ENCODE measurements at regions of chr4 and their contacts with region 1.

Region 1: DNA sequence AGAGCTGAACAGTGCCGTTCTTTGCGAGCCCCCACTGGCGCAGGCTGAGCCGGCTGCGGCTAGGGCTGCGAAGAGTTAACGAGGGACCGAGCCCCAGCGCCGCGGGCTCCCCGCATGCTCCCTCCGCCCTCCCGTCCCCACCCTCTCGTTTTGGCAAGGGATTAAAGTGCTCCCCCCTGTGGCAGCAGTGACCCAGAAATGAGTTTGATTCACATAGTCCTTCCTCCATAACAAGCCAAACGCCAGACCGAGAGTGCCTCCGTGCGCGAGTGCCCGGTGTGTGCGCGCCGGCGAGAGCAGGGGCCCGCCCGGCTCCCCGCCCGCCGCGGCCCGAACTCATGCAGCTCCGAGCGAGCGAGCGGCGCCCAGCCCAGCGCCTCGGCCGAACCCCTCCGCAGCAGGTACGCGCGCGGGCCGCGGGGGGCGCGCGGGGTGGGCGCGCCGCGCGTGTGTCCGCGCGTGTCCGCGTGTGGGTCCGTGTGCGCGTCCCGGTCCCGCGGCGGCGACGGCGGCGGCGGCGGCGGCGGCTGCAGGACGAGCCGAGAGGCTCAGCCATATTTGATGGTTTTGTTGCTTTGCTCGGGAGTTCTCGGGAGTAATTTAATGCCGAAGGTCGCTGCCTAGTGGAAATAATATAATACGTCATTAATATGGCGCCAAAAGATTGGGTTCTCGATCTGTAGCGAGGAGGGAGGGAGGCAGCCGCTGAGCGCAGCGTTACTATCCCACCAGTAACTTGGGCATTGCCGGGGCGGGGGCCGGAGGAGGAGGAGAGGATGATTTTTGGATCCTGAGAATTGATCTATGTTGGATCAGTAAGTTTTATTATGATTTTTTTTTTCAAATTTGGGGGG is at the start of gene JADE1:
- DNase-seq: peak; percentile 98
- H3K4me3 ChIP-seq: peak within 1 kb of the TSS; percentile 83 to 91 (median 87)
- H3K27ac ChIP-seq: peak within 1 kb of the TSS; percentile 90 to 95 (median 93)
- H3K4me1 ChIP-seq: peaks cover 0 to 29% (median 21%) of the 10 kb centered on the region in 4 donors
- H3K27me3 ChIP-seq: no peaks in the 10 kb centered on the region
- CTCF ChIP-seq: peak; percentile 57 to 62 (median 60)
- EP300 ChIP-seq: no peak
- POLR2A ChIP-seq: no peak
- total RNA-seq, gene JADE1: 40.8 to 60.1 (median 52.0) TPM

Region 2: GRCh38 chr4:128060699-128061565 is 748.8 kb before region 1 on chr4 and contains the start of gene LARP1B:
- intact Hi-C with region 1: loop called (anchors 10 kb)
- DNase-seq: peak; percentile 97
- H3K4me3 ChIP-seq: peak within 1 kb of the TSS; percentile 86 to 97 (median 91)
- H3K27ac ChIP-seq: peak within 1 kb of the TSS; percentile 96 to 98 (median 98)
- H3K4me1 ChIP-seq: peaks cover 9 to 19% (median 13%) of the 10 kb centered on the region in 4 donors
- H3K27me3 ChIP-seq: no peaks in the 10 kb centered on the region
- CTCF ChIP-seq: no peak
- EP300 ChIP-seq: no peak
- POLR2A ChIP-seq: peak; percentile 59
- total RNA-seq, gene LARP1B: 18.9 to 27.5 (median 24.1) TPM

Region 3: DNA sequence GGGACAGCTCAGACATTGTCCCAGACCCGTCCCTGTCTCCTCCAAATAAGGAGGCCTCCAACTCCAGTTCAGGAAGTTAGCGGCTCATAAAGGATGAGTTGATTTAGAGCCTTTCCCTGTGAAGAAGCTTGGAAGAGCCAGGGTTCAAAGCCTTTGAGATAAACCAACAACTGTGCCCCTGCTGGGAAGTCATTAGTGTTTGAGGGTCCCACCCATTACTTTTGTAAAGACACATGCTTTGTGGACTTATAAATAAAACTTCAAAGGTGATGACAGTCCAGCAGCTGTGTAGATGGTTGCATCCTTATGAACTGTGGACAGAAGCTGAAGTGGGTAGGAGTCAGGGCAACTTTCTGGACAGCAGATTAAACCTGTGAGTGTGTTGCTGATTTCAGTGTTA is 436.1 kb before region 1 on chr4:
- intact Hi-C with region 1: no loop called
- DNase-seq: no peak
- H3K4me3 ChIP-seq: no peak overlapping the region
- H3K27ac ChIP-seq: no peak overlapping the region
- H3K4me1 ChIP-seq: peaks cover 4 to 35% (median 23%) of the 10 kb centered on the region in 4 donors
- H3K27me3 ChIP-seq: no peaks in the 10 kb centered on the region
- CTCF ChIP-seq: no peak
- EP300 ChIP-seq: no peak
- POLR2A ChIP-seq: no peak

Region 4: DNA sequence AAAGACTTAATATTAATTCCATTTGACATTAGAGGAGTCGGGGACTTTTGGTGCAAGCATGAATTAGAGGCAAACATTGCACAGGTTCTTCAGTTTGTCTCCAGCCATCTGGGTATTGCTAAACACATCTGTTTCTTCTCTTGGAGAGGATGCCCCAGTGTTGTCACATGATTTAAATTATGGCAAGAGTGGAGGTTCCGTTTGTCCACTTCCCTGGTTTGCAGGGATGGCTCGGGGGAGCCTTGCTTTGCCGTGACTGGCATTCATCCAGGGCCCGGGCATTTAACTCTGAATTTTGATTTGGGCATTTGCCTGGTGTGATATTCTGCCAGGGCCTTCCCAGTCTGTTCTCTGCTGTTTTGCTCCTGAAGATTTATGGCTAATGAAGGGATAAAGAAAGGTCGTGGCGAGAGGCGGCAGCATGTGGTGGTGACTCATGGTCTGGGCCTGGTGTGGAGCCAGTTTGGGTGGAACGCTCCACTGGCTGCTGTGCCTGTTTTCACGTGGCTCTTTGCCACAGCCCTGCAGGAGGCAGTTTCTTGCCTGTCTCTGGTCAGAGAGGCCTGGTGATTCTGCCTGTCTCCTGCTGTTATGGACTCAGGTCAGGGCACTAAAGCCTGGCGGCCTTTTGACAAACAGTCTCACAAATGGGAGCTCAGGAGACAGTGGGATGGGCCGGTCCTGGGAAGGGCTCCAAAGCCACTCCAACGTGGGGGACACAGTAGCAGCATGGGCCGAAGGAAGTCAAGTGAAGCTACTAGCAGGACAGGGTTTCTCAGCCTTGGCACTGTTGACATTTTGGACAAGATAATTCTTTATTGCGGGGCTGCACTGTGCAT is 422.7 kb before region 1 on chr4:
- intact Hi-C with region 1: loop called (anchors 5 kb)
- DNase-seq: peak; percentile 98
- H3K4me3 ChIP-seq: peak overlapping the region in 3 of 4 donors; percentile 13 to 42 (median 29)
- H3K27ac ChIP-seq: peak overlapping the region; percentile 77 to 86 (median 82)
- H3K4me1 ChIP-seq: peaks cover 38 to 83% (median 80%) of the 10 kb centered on the region in 4 donors
- H3K27me3 ChIP-seq: no peaks in the 10 kb centered on the region
- CTCF ChIP-seq: peak in 1 of 3 experiments; percentile 8
- EP300 ChIP-seq: no peak
- POLR2A ChIP-seq: no peak

Region 5: GRCh38 chr4:128565565-128566186 is 244.0 kb before region 1 on chr4:
- intact Hi-C with region 1: loop called (anchors 5 kb)
- DNase-seq: no peak
- H3K4me3 ChIP-seq: no peak overlapping the region
- H3K27ac ChIP-seq: no peak overlapping the region
- H3K4me1 ChIP-seq: peaks cover 3 to 23% (median 21%) of the 10 kb centered on the region in 4 donors
- H3K27me3 ChIP-seq: no peaks in the 10 kb centered on the region
- CTCF ChIP-seq: peak; percentile 63 to 71 (median 65)
- EP300 ChIP-seq: no peak
- POLR2A ChIP-seq: no peak

Region 6: GRCh38 chr4:128863312-128864075 is 53.8 kb after region 1 on chr4:
- intact Hi-C with region 1: loop called (anchors 5 kb)
- DNase-seq: no peak
- H3K4me3 ChIP-seq: no peak overlapping the region
- H3K27ac ChIP-seq: peak overlapping the region in 2 of 4 donors; percentile 10 to 21
- H3K4me1 ChIP-seq: peaks cover 22 to 46% (median 39%) of the 10 kb centered on the region in 4 donors
- H3K27me3 ChIP-seq: no peaks in the 10 kb centered on the region
- CTCF ChIP-seq: peak; percentile 80 to 88 (median 83)
- EP300 ChIP-seq: no peak
- POLR2A ChIP-seq: no peak

Measured in esophagus muscularis mucosa (tissue), 4 donors.